K562 (cell line): ENCODE measurements at regions of chr1 and their contacts with region 1.

Region 1: GRCh38 chr1:203216274-203217138 is 13.0 kb downstream of the CHIT1 start:
- DNase-seq: peak; percentile 71 to 82 (median 75)
- ATAC-seq: peak; percentile 94
- H3K4me3 ChIP-seq: no peak overlapping the region
- H3K27ac ChIP-seq: no peak overlapping the region
- H3K4me1 ChIP-seq: no peaks in the 10 kb centered on the region
- H3K27me3 ChIP-seq: peaks cover 17 to 61% of the 10 kb centered on the region in 2 experiments
- CTCF ChIP-seq: peak; percentile 84 to 93 (median 86)
- EP300 ChIP-seq: no peak
- POLR2A ChIP-seq: no peak
- RAD21 ChIP-seq: peak; percentile 88 to 93

Region 2: GRCh38 chr1:203031467-203031866 is 185.0 kb before region 1 on chr1:
- CTCF ChIA-PET with region 1: interaction called, 3 read pairs
- POLR2A ChIA-PET with region 1: interaction called, 3 read pairs
- in situ Hi-C with region 1: loop called (anchors 5 kb)
- intact Hi-C with region 1: no loop called
- DNase-seq: peak; percentile 55 to 67 (median 61)
- ATAC-seq: peak; percentile 52
- H3K4me3 ChIP-seq: no peak overlapping the region
- H3K27ac ChIP-seq: no peak overlapping the region
- H3K4me1 ChIP-seq: peaks cover 6 to 23% of the 10 kb centered on the region in 2 experiments; a peak in 4 of 5 replicates
- H3K27me3 ChIP-seq: peaks cover 14 to 15% of the 10 kb centered on the region in 2 experiments; a peak in 3 of 5 replicates
- CTCF ChIP-seq: peak; percentile 73 to 91 (median 89)
- EP300 ChIP-seq: no peak; the same call in 1 of the 2 replicates
- POLR2A ChIP-seq: no peak
- RAD21 ChIP-seq: peak in 1 of 2 experiments; percentile 62; a peak in 2 of 4 replicates

Region 3: DNA sequence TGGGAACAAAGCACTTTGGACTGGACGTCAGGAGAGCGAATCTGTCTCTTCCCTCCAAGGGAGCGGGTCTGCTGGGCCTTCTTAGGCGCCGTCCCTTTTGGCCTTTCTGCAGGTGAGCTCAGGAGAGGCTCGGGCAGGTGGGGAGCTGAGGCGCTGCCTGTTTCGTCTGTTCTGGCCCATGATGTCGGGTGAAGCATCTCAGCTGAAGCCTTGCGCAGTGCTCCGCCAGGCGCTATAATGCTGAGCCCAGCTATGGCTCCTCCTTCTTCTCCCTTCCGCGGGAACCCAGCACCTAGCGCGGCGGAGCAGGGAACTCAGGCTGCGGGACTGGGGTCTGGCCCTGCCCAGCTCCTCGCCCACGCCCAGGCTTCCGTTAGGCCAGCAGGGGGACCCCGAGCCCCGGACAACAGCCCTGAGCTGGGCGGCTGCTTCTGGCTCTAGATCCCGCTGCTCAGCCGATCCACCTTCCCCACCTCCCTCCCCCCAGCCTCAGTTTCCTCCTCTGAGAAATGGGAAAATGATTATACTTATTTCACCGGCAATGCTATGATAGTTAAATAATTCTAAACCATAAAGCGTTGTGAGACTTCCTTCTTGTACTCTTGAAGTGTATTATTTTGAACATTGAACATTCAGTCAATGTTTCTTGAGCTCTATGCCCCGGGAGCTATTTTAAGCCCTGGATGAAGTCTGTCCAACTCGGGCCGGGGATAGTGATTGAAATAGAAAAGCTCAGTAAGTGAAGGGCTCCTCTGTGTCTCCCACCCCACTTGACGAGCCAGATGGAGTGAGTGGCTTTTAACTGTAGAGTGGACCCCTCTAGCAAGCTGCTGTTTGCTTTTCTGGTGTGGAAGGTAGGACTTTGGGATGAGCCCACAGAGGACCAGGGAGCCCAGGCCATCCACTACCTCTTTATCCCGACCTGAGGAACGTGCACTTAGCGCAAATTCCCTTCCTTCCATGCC is 98.6 kb before region 1 on chr1:
- CTCF ChIA-PET with region 1: interaction called, 24 read pairs
- POLR2A ChIA-PET with region 1: no interaction called
- in situ Hi-C with region 1: no loop called
- intact Hi-C with region 1: loop called (anchors 1 kb)
- DNase-seq: peak; percentile 78 to 96 (median 94)
- ATAC-seq: peak; percentile 100
- H3K4me3 ChIP-seq: no peak overlapping the region
- H3K27ac ChIP-seq: no peak overlapping the region
- H3K4me1 ChIP-seq: peaks cover 0 to 5% of the 10 kb centered on the region in 2 experiments; a peak in 1 of 5 replicates
- H3K27me3 ChIP-seq: peaks cover 12 to 58% of the 10 kb centered on the region in 2 experiments; a peak in 4 of 5 replicates
- CTCF ChIP-seq: peak; percentile 87 to 92 (median 89)
- EP300 ChIP-seq: no peak
- POLR2A ChIP-seq: no peak
- RAD21 ChIP-seq: peak; percentile 94 to 96

Region 4: DNA sequence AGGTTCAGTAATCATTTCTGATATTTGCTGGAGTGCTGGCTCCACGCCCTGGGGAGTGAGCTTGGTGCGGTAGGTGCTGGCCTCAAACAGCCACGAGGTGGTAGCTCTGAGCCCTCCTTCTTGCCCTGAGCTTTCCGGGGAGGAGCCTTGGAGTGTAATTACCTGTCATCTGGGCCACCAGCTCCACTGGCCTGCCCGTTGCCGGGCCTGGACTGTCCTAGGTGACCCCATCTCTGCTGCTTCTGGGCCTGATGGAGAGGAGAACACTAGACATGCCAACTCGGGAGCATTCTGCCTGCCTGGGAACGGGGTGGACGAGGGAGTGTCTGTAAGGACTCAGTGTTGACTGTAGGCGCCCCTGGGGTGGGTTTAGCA is 50.0 kb before region 1 on chr1:
- CTCF ChIA-PET with region 1: interaction called, 10 read pairs
- POLR2A ChIA-PET with region 1: no interaction called
- in situ Hi-C with region 1: no loop called
- intact Hi-C with region 1: loop called (anchors 2 kb)
- DNase-seq: peak; percentile 59 to 68 (median 65)
- ATAC-seq: peak; percentile 94
- H3K4me3 ChIP-seq: no peak overlapping the region
- H3K27ac ChIP-seq: no peak overlapping the region
- H3K4me1 ChIP-seq: peaks cover 0 to 11% of the 10 kb centered on the region in 2 experiments; a peak in 1 of 5 replicates
- H3K27me3 ChIP-seq: peaks cover 29 to 92% of the 10 kb centered on the region in 2 experiments; a peak in 4 of 5 replicates
- CTCF ChIP-seq: peak; percentile 54 to 64 (median 63)
- EP300 ChIP-seq: no peak
- POLR2A ChIP-seq: no peak
- RAD21 ChIP-seq: peak in 1 of 2 experiments; percentile 55; a peak in 3 of 4 replicates